ENCODE measurements at regions of chr2 and their contacts with region 1.

Region 1: GRCh38 chr2:223860809-223861738 is 23.7 kb upstream of the AP1S3 start:
- DNase-seq: peak; percentile 94
- H3K4me3 Mint-ChIP-seq: peak overlapping the region; percentile 66
- H3K27ac Mint-ChIP-seq: peak overlapping the region; percentile 96
- H3K4me1 Mint-ChIP-seq: peaks cover 15% of the 10 kb centered on the region
- H3K27me3 Mint-ChIP-seq: no peaks in the 10 kb centered on the region
- CTCF ChIP-seq: no peak

Region 2: DNA sequence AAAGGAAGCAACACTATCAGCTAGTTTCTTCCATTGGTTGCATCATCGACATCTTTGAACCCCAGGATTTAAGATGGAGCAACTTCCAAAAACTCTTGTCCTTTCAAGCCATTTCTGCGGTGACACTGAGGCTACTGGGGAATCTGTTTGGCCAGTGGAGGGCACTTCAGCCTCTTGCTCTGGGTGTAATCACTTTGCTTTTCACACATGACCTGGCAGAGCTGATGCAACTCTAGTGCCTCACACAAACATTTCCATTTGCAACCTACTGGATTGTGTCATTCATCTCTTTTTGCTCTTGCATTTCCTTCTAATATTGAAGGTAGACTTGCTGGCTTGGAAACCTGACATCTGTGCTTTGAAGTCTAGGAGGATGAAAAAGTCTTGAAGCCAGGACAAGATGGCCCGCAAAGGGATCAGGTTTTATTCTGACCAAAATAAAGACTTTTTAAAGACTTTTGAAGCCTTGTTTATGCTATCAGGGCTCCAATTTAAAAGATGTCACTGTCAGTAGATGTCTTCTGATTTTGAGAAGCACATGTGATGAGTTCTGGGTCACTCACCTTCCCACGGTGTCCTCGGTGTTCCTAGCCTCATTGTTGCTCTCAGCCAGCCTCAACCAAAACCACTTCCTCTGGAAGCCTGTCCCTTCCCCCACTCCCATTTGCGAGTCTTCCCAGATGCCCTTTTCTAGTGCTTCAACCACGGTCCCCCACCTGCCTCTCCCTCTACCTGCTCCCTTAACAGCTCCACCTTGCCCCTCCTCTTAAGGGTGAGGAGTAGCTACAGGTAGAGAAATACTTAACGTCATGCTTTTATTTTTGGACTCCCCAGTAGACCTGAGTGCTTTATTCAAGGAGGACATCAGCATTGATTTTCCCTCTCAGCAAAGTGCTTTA is 878.8 kb before region 1 on chr2:
- CTCF ChIA-PET with region 1: no interaction called
- POLR2A ChIA-PET with region 1: no interaction called
- intact Hi-C with region 1: loop called (anchors 10 kb)
- DNase-seq: peak; percentile 85
- H3K4me3 Mint-ChIP-seq: no peak overlapping the region
- H3K27ac Mint-ChIP-seq: peak overlapping the region; percentile 25
- H3K4me1 Mint-ChIP-seq: peaks cover 17% of the 10 kb centered on the region
- H3K27me3 Mint-ChIP-seq: no peaks in the 10 kb centered on the region
- CTCF ChIP-seq: peak; percentile 47

Region 3: DNA sequence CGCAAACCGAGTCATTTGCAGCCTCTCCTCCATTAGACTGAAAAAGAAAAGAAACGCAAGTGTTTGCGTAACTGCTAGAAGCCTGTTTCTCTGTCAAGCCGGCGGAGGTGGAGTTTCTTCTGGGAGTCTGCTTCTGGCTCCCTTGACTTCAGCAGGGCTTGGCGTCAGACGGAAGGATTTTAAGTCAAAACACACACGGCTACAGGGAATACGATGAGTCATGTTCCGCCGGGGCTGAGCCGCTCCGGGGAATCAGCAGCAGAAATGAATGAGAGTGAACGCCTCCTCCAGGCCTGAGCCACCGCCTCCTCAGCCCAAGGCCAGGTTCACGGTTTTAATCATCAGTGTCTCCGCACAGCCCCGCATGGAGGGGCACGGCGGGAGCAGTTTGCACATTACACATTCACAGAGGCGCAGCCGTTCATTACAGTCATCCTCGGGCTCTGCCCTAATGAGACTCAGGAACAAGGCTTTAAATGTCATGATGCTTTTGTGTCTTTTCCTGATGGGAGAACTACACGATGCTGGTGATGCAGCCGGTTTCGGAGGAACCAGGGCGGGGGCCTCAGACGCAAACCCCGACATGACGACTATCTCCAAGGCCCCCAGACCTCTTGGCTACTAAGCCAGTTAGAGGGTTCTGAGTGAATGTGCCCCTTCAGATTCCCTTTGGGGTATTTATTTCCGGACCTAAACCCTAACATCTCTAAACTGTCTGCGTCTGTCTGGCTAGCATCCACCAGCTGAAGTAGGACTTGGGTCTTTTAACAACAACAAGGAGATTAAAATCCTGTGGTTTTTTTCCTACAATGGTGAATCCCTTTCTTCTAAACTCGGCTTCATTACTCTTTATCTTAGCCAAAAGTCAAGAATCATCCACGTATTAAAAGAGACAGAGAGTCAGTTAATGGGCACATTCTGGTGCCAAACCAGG is 247.8 kb before region 1 on chr2:
- CTCF ChIA-PET with region 1: no interaction called
- POLR2A ChIA-PET with region 1: no interaction called
- intact Hi-C with region 1: loop called (anchors 5 kb)
- DNase-seq: peak; percentile 98
- H3K4me3 Mint-ChIP-seq: peak overlapping the region; percentile 66
- H3K27ac Mint-ChIP-seq: peak overlapping the region; percentile 69
- H3K4me1 Mint-ChIP-seq: no peaks in the 10 kb centered on the region
- H3K27me3 Mint-ChIP-seq: no peaks in the 10 kb centered on the region
- CTCF ChIP-seq: no peak

Region 4: GRCh38 chr2:223668302-223668998 is 192.6 kb before region 1 on chr2:
- CTCF ChIA-PET with region 1: no interaction called
- POLR2A ChIA-PET with region 1: no interaction called
- intact Hi-C with region 1: no loop called
- DNase-seq: no peak
- H3K4me3 Mint-ChIP-seq: no peak overlapping the region
- H3K27ac Mint-ChIP-seq: no peak overlapping the region
- H3K4me1 Mint-ChIP-seq: no peaks in the 10 kb centered on the region
- H3K27me3 Mint-ChIP-seq: no peaks in the 10 kb centered on the region
- CTCF ChIP-seq: no peak

Region 5: GRCh38 chr2:223727562-223727961 is 133.5 kb before region 1 on chr2:
- CTCF ChIA-PET with region 1: interaction called, 13 read pairs
- POLR2A ChIA-PET with region 1: interaction called, 3 read pairs
- intact Hi-C with region 1: no loop called
- DNase-seq: peak; percentile 80
- H3K4me3 Mint-ChIP-seq: no peak overlapping the region
- H3K27ac Mint-ChIP-seq: no peak overlapping the region
- H3K4me1 Mint-ChIP-seq: peaks cover 24% of the 10 kb centered on the region
- H3K27me3 Mint-ChIP-seq: no peaks in the 10 kb centered on the region
- CTCF ChIP-seq: peak; percentile 42

Region 6: DNA sequence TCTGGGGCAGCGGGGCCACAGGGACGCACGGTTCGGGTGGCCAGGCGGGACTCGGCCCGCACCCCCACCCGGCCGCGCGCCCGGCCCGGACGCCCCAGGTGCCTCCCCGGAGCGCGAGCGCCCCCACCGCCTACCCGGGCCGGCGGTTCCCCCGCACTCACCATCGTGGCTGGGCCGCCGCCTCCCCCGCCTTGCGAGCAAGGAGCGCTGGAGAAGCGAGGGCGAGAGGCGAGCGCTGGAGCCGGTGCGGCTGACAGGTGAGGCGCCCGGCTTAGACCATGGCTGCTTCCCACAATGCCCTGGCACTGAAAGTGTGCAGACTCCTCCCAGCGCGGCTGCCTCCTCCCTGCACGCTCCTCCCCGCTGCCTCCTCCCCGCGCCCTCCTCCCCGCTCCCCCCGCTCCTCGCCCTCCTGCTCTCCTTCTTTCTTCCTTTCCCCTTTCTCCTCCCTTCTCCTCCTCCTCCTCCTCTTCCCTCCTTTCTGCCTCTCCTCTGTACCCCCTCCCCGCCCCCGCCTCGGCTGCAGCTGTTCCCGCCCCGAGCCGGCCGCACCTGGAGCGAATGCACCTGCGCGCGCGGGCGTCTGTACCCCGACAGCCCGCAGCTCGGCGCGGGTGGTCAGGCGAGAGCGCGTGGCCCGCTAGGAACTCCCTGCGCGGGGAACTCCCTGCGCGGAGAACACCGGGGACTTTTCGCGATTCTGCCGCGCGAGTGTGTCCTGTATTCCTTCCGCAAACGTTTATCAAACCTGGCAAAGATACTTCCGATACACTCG is 23.6 kb before region 1 on chr2 and contains the start of gene AP1S3:
- CTCF ChIA-PET with region 1: interaction called, 3 read pairs
- POLR2A ChIA-PET with region 1: interaction called, 22 read pairs
- intact Hi-C with region 1: no loop called
- DNase-seq: peak; percentile 83
- H3K4me3 Mint-ChIP-seq: peak within 1 kb of the TSS; percentile 95
- H3K27ac Mint-ChIP-seq: peak within 1 kb of the TSS; percentile 63
- H3K4me1 Mint-ChIP-seq: peaks cover 22% of the 10 kb centered on the region
- H3K27me3 Mint-ChIP-seq: no peaks in the 10 kb centered on the region
- CTCF ChIP-seq: no peak
- total RNA-seq, gene AP1S3: 56.9 and 57.7 TPM in 2 replicates

Region 7: DNA sequence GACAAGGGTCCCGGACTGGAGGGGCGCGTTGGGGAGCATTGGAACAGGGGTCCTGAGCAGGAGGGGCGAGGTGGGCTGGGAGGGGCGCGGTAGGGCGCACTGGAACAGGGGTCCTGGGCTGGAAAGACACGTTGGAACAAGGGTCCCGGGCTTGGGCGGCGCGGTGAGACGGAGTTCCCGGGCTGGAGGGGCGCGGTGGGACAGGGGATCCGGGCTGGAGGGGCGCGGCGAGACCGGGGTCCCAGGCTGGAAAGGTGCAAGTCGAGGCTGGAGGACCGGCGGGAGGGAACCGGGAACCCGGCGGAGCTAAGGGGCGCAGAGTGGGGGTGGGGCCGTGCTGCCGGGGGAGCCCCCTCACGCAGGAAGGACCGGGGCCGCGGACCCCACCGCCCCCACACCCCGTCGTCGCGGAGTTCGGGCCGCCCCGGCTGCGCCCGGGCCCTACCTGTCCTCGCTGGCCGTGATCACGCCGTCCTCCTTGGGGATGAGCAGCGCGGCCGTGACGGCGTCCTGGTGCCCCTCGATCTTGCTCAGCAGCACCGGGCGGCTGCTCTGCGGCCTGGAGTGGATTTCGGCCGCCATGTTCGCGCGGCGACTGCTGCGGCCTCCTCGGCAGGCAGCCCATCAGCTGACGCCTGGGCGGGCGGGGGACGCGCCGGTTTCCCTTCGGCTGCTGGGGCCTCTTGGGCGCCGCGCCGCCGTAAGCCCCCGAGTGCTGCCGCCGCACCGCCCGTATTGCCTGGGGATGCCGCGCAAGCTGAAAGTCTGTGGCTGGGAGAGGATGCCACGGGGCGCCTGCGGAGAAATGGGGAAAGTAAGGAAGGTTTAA is 83.8 kb after region 1 on chr2 and contains the start of gene WDFY1:
- CTCF ChIA-PET with region 1: interaction called, 4 read pairs
- POLR2A ChIA-PET with region 1: interaction called, 10 read pairs
- intact Hi-C with region 1: no loop called
- DNase-seq: peak; percentile 79
- H3K4me3 Mint-ChIP-seq: peak within 1 kb of the TSS; percentile 96
- H3K27ac Mint-ChIP-seq: peak within 1 kb of the TSS; percentile 90
- H3K4me1 Mint-ChIP-seq: peaks cover 30% of the 10 kb centered on the region
- H3K27me3 Mint-ChIP-seq: no peaks in the 10 kb centered on the region
- CTCF ChIP-seq: no peak
- total RNA-seq, gene WDFY1: 36.9 and 41.8 TPM in 2 replicates

Region 8: GRCh38 chr2:223957092-223957851 is 96.2 kb after region 1 on chr2 and contains the start of gene MRPL44:
- CTCF ChIA-PET with region 1: interaction called, 5 read pairs
- POLR2A ChIA-PET with region 1: interaction called, 7 read pairs
- intact Hi-C with region 1: loop called (anchors 2 kb)
- DNase-seq: peak; percentile 95
- H3K4me3 Mint-ChIP-seq: peak within 1 kb of the TSS; percentile 92
- H3K27ac Mint-ChIP-seq: peak within 1 kb of the TSS; percentile 95
- H3K4me1 Mint-ChIP-seq: peaks cover 15% of the 10 kb centered on the region
- H3K27me3 Mint-ChIP-seq: no peaks in the 10 kb centered on the region
- CTCF ChIP-seq: no peak
- total RNA-seq, gene MRPL44: 27.4 and 31.2 TPM in 2 replicates

Measured in MCF 10A (cell line).